Head of caudate nucleus (tissue), 42 donors: ENCODE measurements at regions of chr4 and their contacts with region 1.

Region 1: GRCh38 chr4:41214136-41214824 is at the start of gene APBB2:
- DNase-seq: peak; percentile 90 to 98 (median 95)

Region 2: DNA sequence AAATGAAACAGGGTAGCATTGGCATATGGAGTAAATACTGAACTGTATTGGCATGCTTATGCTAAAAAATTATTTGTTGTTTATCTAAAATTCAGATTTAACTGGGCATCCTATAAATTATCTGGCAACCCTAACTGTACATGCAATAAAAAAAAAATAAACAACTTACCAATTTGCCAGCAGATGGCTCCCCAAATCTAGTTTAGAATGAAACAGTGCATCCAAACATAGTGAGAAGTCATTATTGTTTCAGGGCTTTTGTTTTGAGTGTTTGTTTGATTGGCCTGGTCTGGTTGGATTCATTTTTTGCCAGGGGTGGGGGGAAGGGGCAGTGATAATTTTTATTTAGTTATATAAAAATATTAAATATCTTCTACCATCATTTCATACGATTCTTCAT is 477.4 kb before region 1 on chr4:
- intact Hi-C with region 1: loop called (anchors 10 kb)
- DNase-seq: peak in 5 of 42 donors; percentile 16 to 54 (median 29)

Region 3: GRCh38 chr4:40924096-40924792 is 290.0 kb before region 1 on chr4:
- intact Hi-C with region 1: loop called (anchors 2 kb)
- DNase-seq: peak; percentile 38 to 89 (median 70)

Region 4: GRCh38 chr4:40976343-40976742 is 237.9 kb before region 1 on chr4:
- intact Hi-C with region 1: loop called (anchors 5 kb)
- DNase-seq: peak in 21 of 42 donors; percentile 17 to 84 (median 56)

Region 5: DNA sequence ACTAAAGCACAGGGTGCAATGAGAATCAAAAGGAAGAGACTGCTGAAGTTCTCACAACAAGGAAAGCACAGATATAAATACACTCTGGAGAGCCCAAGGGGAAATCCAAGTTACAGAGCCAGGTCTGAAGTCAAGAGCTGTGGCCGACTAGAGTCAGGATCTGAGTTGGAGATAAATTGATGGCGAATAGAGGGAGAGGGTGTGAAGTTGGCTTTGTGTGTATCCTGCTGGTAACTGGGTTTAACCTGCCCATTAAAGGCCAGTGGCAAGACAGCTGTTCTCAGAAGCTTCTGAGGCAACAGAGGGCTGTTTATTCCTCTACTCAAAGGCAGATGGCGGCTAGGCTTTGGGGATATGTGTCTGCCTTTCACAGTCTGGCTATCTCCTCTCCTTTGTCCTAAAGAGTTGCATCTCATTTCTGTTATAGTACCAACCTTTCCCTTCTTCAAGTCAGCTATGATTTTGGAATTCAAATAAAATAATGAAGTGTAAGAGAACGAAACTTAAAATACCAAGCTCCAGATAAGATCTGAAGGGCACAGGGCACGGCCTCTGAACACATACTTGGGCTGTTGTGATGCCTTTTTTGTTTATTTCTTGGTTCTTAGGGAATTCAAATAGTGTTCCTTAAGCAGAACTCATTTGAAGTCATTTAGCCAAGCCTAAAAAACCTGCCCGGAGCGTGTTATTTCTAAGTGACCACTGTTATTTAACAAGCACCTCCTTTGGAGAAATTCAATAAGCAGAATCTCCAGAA is 142.1 kb before region 1 on chr4:
- intact Hi-C with region 1: loop called (anchors 5 kb)
- DNase-seq: peak in 25 of 42 donors; percentile 16 to 77 (median 44)

Region 6: DNA sequence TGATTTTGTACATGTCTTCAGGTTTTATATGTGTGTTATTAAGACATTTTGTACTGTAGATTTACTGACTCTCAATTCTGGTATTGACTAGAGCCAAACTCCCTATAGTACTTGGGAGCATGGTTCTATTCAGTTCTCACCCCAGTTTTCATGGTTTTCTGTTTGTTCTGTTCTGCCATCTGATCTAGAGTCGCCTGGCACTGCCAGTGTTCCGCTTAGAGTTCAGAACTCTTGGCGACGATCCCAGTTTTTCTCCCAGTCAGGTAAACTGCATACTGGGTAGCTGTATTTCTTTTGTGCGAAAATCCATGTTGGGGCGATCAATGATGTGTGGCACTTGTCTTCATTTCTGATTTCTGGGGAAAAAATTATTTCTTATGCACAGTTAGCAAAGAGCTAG is 456.2 kb after region 1 on chr4:
- intact Hi-C with region 1: no loop called
- DNase-seq: peak in 13 of 42 donors; percentile 7 to 66 (median 41)